ENCODE measurements at regions of chr10 and their contacts with region 1.

Region 1: DNA sequence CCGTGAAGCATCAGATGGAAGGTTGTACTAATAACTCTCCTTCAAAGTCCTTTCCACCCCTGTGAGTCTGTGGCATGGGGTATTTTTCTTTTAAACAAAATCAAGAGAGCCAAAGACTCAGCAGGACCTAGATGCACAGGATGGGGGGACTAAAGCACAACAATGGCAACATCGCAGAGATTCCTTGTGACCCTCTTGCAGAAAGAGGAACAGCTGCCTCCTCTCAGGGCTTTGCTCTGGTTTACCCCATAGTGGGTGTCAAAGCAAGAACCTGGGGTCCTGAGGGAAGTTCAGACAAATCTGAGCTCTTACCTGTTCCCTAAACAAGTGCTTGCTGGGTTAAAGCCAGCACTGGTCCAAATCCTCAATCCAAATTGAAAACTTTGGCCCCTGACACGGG is 39.2 kb downstream of the FGF8 start:
- DNase-seq: no peak
- ATAC-seq: no peak
- H3K4me3 Mint-ChIP-seq: no peak overlapping the region
- H3K27ac Mint-ChIP-seq: no peak overlapping the region
- H3K4me1 Mint-ChIP-seq: no peaks in the 10 kb centered on the region
- H3K27me3 Mint-ChIP-seq: peaks cover 19% of the 10 kb centered on the region

Region 2: GRCh38 chr10:101759309-101760247 is 22.9 kb after region 1 on chr10:
- CTCF ChIA-PET with region 1: no interaction called
- POLR2A ChIA-PET with region 1: no interaction called
- intact Hi-C with region 1: loop called in 1 of 2 experiments (anchors 2 kb)
- DNase-seq: no peak
- ATAC-seq: no peak
- H3K4me3 Mint-ChIP-seq: no peak overlapping the region
- H3K27ac Mint-ChIP-seq: no peak overlapping the region
- H3K4me1 Mint-ChIP-seq: no peaks in the 10 kb centered on the region
- H3K27me3 Mint-ChIP-seq: peaks cover 4% of the 10 kb centered on the region

Measured in activated CD4-positive, alpha-beta T cell treated with anti-CD3 and anti-CD28 coated beads for 36 hours (primary cell).